Activated B cell treated with CpG ODN at 0.5 μM for 24 hours (primary cell): ENCODE measurements at regions of chr2 and their contacts with region 1.

Region 1: GRCh38 chr2:42102024-42102590 is 54.3 kb downstream of the PKDCC start:
- DNase-seq: peak; percentile 88
- ATAC-seq: peak; percentile 72
- H3K4me3 Mint-ChIP-seq: peak overlapping the region; percentile 88
- H3K27ac Mint-ChIP-seq: no peak overlapping the region
- H3K4me1 Mint-ChIP-seq: peaks cover 47% of the 10 kb centered on the region
- H3K27me3 Mint-ChIP-seq: no peaks in the 10 kb centered on the region
- CTCF ChIP-seq: no peak

Region 2: GRCh38 chr2:41791523-41791922 is 310.6 kb before region 1 on chr2:
- CTCF ChIA-PET with region 1: no interaction called
- POLR2A ChIA-PET with region 1: no interaction called
- intact Hi-C with region 1: no loop called
- DNase-seq: no peak
- ATAC-seq: no peak
- H3K4me3 Mint-ChIP-seq: no peak overlapping the region
- H3K27ac Mint-ChIP-seq: no peak overlapping the region
- H3K4me1 Mint-ChIP-seq: no peaks in the 10 kb centered on the region
- H3K27me3 Mint-ChIP-seq: peaks cover 7% of the 10 kb centered on the region
- CTCF ChIP-seq: no peak

Region 3: DNA sequence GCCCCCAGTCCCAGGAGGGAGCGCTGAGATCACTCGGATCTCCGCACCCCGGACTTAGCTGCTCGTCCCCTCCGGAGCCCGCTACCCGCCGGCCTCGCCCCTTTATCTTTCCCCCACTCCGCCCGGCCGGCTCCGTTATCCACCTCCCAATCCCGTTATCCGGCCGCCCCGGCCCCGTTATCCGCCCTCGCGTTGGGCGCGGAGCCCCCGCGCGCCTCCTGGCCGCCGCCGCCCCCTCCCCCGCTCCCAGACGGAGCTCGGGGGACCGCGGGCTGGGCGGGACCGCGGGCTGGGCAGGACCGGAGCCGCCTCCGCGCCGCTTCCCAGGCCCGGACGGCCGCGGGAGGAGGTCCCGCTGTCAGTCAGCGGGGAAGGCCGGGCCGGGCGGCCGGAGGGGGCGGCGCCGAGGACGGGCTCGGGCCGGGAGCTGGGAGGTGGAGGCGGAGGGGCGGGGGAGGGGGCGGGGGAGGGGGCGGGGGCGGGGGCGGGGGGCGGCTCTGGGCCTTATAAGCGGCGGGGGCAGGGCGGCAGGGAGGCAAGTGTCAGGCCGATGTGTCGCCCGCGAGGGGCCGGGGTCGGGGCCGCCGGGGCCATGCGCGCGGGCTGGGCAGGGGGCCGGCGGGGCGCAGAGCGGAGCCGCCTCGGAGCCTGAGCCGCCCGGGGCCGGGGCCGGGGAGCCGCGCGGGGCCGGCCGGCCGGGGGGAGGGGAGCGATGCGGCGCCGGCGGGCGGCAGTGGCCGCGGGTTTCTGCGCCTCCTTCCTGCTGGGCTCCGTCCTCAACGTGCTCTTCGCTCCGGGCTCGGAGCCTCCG is 54.4 kb before region 1 on chr2 and contains the start of gene PKDCC:
- CTCF ChIA-PET with region 1: no interaction called
- POLR2A ChIA-PET with region 1: no interaction called
- intact Hi-C with region 1: no loop called
- DNase-seq: peak; percentile 31
- ATAC-seq: peak; percentile 71
- H3K4me3 Mint-ChIP-seq: peak within 1 kb of the TSS; percentile 70
- H3K27ac Mint-ChIP-seq: no peak within 1 kb of the TSS
- H3K4me1 Mint-ChIP-seq: peaks cover 6% of the 10 kb centered on the region
- H3K27me3 Mint-ChIP-seq: peaks cover 52% of the 10 kb centered on the region
- CTCF ChIP-seq: no peak
- total RNA-seq, gene PKDCC: 0.24 TPM in 1 of 2 replicates, not detected in the other

Region 4: DNA sequence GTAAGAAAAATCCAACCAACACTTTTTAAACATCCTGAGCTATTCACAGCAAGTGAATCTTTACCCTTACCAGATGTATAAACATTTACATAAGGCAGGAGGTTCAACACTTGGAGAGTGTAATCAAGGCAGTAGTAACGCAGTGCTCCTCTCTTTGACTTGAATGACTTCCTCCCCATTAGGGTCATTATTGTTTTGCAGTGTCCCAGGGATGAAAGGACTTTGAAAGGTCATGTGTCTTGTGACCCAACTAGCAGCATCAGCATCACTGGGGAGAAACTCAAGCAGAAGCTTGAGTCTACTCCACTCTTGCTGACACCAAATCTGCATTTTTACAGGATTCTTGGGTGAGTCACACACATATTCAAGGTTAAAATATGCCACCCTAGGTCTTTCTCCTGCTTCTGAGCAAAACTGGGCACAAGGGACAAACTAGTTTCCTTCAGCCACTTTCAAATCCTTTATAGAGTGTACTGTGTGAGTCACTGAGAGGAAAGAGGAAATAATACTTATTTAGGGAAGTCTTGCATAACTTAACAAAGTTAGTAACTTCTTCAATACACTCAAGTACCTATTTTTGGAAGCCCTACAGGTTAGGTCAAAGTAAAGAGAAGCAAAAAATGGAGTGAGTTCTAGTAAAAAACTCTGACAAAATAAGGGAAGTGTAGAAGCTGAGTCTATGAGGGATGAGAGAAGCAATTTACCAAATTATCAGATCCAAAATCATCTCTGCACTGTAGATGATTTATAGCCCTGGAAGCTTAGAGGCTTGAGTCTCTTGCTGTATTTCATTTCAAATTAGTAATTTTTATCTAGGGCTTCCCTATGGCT is 16.0 kb after region 1 on chr2:
- CTCF ChIA-PET with region 1: interaction called, 8 read pairs
- POLR2A ChIA-PET with region 1: interaction called, 53 read pairs
- intact Hi-C with region 1: loop called (anchors 1 kb)
- DNase-seq: no peak
- ATAC-seq: peak; percentile 90
- H3K4me3 Mint-ChIP-seq: peak overlapping the region; percentile 28
- H3K27ac Mint-ChIP-seq: peak overlapping the region; percentile 69
- H3K4me1 Mint-ChIP-seq: peaks cover 67% of the 10 kb centered on the region
- H3K27me3 Mint-ChIP-seq: no peaks in the 10 kb centered on the region
- CTCF ChIP-seq: no peak

Region 5: DNA sequence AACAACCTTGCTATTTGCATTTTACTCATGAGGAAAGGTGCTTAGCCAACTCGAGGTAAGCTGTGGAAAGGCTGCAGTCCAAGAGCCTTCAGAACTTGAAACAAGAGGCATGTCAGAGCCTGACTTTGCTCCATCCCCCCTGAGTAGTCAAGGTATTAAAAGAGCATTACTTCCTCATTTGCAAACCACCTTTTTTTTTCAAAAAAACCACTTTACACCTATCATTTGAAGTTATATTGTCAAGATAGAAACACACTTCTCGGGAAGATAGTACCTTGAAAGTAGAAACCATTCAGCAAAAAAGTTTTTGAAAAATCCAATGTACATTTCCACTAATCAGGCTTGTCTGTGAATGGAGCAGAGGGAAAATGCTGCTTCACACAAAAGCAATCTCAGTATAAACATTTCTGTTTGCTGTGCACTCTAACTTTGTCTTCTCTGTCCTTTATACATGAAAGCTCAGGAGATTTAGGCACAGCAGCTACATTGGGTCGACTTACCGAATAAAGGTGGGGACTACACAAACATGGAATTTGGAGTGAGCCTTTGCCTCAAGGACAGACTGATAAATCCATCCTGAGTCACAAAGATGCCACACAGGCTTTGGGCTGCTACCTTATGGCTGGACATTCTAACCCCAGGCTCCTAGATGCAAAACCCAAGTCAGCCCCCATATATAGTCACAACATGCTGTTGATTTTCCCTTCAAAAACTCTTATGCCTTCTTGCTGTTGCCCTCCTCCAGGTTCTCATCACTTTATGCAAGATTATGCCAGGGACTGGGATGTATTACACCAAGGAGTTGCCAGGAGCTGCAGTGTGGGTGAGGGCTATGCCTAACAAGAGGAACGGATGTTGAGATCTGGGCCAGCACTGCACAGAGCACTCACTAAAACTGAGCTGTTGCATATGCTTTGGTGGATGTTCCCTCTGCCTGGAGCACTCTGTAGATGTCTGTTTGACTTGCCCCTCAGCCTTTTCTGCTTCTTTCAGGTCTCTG is 25.6 kb after region 1 on chr2:
- CTCF ChIA-PET with region 1: interaction called, 8 read pairs
- POLR2A ChIA-PET with region 1: interaction called, 53 read pairs
- intact Hi-C with region 1: no loop called
- DNase-seq: no peak
- ATAC-seq: peak; percentile 57
- H3K4me3 Mint-ChIP-seq: peak overlapping the region; percentile 66
- H3K27ac Mint-ChIP-seq: peak overlapping the region; percentile 75
- H3K4me1 Mint-ChIP-seq: peaks cover 89% of the 10 kb centered on the region
- H3K27me3 Mint-ChIP-seq: no peaks in the 10 kb centered on the region
- CTCF ChIP-seq: no peak

Region 6: GRCh38 chr2:42132966-42133641 is 31.0 kb after region 1 on chr2:
- CTCF ChIA-PET with region 1: interaction called, 7 read pairs
- POLR2A ChIA-PET with region 1: interaction called, 53 read pairs
- intact Hi-C with region 1: loop called (anchors 1 kb)
- DNase-seq: peak; percentile 57
- ATAC-seq: peak; percentile 93
- H3K4me3 Mint-ChIP-seq: peak overlapping the region; percentile 80
- H3K27ac Mint-ChIP-seq: peak overlapping the region; percentile 89
- H3K4me1 Mint-ChIP-seq: peaks cover 80% of the 10 kb centered on the region
- H3K27me3 Mint-ChIP-seq: no peaks in the 10 kb centered on the region
- CTCF ChIP-seq: no peak

Region 7: GRCh38 chr2:42256505-42256904 is 154.4 kb after region 1 on chr2:
- CTCF ChIA-PET with region 1: no interaction called
- POLR2A ChIA-PET with region 1: interaction called, 6 read pairs
- intact Hi-C with region 1: loop called (anchors 1 kb)
- DNase-seq: no peak
- ATAC-seq: peak; percentile 68
- H3K4me3 Mint-ChIP-seq: peak overlapping the region; percentile 4
- H3K27ac Mint-ChIP-seq: peak overlapping the region; percentile 32
- H3K4me1 Mint-ChIP-seq: peaks cover 45% of the 10 kb centered on the region
- H3K27me3 Mint-ChIP-seq: no peaks in the 10 kb centered on the region
- CTCF ChIP-seq: no peak